A549 (cell line): ENCODE measurements at regions of chr11 and their contacts with region 1.

Region 1: GRCh38 chr11:88357323-88358039 is 19.9 kb upstream of the CTSC start:
- DNase-seq: peak in 1 of 2 experiments; percentile 47
- ATAC-seq: peak; percentile 54 to 73; a peak in 4 of 6 replicates
- H3K4me3 ChIP-seq: no peak overlapping the region
- H3K27ac ChIP-seq: peak overlapping the region; percentile 57 to 77
- H3K4me1 ChIP-seq: peaks cover 15% of the 10 kb centered on the region
- CTCF ChIP-seq: no peak
- EP300 ChIP-seq: no peak
- POLR2A ChIP-seq: no peak
- RAD21 ChIP-seq: no peak

Region 2: GRCh38 chr11:88337181-88337986 is 20.1 kb before region 1 on chr11 and contains the start of gene CTSC:
- CTCF ChIA-PET with region 1: no interaction called
- POLR2A ChIA-PET with region 1: interaction called, 12 read pairs
- DNase-seq: peak; percentile 77 to 87
- ATAC-seq: peak; percentile 97 to 98
- H3K4me3 ChIP-seq: peak within 1 kb of the TSS; percentile 71
- H3K27ac ChIP-seq: peak within 1 kb of the TSS; percentile 89 to 94
- H3K4me1 ChIP-seq: peaks cover 11% of the 10 kb centered on the region; the same call in 2 of the 3 replicates
- CTCF ChIP-seq: no peak
- EP300 ChIP-seq: no peak
- POLR2A ChIP-seq: peak; percentile 73
- RAD21 ChIP-seq: peak; percentile 4 to 27; a peak in 1 of 5 replicates
- polyA plus RNA-seq, gene CTSC: 118 and 123 TPM in 2 replicates